ENCODE measurements at regions of chr5 and their contacts with region 1.

Region 1: GRCh38 chr5:57635146-57635777 is 152.7 kb upstream of the ACTBL2 start:
- DNase-seq: no peak
- H3K4me3 Mint-ChIP-seq: no peak overlapping the region
- H3K27ac Mint-ChIP-seq: no peak overlapping the region
- H3K4me1 Mint-ChIP-seq: no peaks in the 10 kb centered on the region
- H3K27me3 Mint-ChIP-seq: peaks cover 6% of the 10 kb centered on the region

Region 2: GRCh38 chr5:57007344-57007743 is 627.9 kb before region 1 on chr5:
- CTCF ChIA-PET with region 1: no interaction called
- POLR2A ChIA-PET with region 1: no interaction called
- intact Hi-C with region 1: no loop called
- DNase-seq: no peak
- H3K4me3 Mint-ChIP-seq: no peak overlapping the region
- H3K27ac Mint-ChIP-seq: no peak overlapping the region
- H3K4me1 Mint-ChIP-seq: no peaks in the 10 kb centered on the region
- H3K27me3 Mint-ChIP-seq: peaks cover 2% of the 10 kb centered on the region

Region 3: DNA sequence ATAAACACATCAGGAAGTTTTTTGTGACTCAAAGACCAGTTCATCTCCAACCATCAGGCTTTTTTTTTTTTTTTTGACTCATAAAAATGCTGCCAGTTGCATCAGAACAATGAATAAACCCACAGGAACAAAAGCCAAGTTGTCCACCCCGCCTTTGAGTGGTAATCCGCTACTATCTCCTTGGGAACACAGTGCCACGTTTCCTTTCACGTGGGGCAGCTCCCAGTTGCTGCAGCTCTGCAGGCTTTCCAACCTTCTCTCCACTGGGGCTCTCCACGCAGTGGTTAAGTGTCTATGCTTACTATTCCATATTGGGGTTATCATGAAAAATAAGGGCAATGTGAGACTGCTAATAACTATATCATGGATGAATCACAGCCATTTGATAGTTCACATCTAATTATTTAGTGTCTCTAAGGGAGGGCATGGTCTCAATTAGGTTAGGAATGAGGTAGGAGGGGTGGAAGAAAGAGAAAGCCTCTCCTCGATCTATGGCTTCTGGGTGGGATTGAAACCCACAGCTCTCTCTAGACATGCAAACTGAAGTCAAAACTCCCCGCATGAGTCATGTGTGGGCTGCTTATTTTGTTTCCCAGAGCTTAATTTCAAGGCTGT is 96.8 kb before region 1 on chr5:
- CTCF ChIA-PET with region 1: no interaction called
- POLR2A ChIA-PET with region 1: no interaction called
- intact Hi-C with region 1: no loop called
- DNase-seq: no peak
- H3K4me3 Mint-ChIP-seq: no peak overlapping the region
- H3K27ac Mint-ChIP-seq: no peak overlapping the region
- H3K4me1 Mint-ChIP-seq: peaks cover 9% of the 10 kb centered on the region
- H3K27me3 Mint-ChIP-seq: peaks cover 3% of the 10 kb centered on the region

Region 4: GRCh38 chr5:57566914-57567313 is 68.3 kb before region 1 on chr5:
- CTCF ChIA-PET with region 1: no interaction called
- POLR2A ChIA-PET with region 1: no interaction called
- intact Hi-C with region 1: no loop called
- DNase-seq: no peak
- H3K4me3 Mint-ChIP-seq: no peak overlapping the region
- H3K27ac Mint-ChIP-seq: no peak overlapping the region
- H3K4me1 Mint-ChIP-seq: no peaks in the 10 kb centered on the region
- H3K27me3 Mint-ChIP-seq: peaks cover 28% of the 10 kb centered on the region

Region 5: GRCh38 chr5:57650360-57651069 is 15.3 kb after region 1 on chr5:
- CTCF ChIA-PET with region 1: interaction called, 16 read pairs
- POLR2A ChIA-PET with region 1: no interaction called
- intact Hi-C with region 1: no loop called
- DNase-seq: peak; percentile 19
- H3K4me3 Mint-ChIP-seq: no peak overlapping the region
- H3K27ac Mint-ChIP-seq: no peak overlapping the region
- H3K4me1 Mint-ChIP-seq: no peaks in the 10 kb centered on the region
- H3K27me3 Mint-ChIP-seq: peaks cover 15% of the 10 kb centered on the region

Region 6: GRCh38 chr5:57976506-57976905 is 341.2 kb after region 1 on chr5:
- CTCF ChIA-PET with region 1: no interaction called
- POLR2A ChIA-PET with region 1: no interaction called
- intact Hi-C with region 1: no loop called
- DNase-seq: no peak
- H3K4me3 Mint-ChIP-seq: no peak overlapping the region
- H3K27ac Mint-ChIP-seq: no peak overlapping the region
- H3K4me1 Mint-ChIP-seq: no peaks in the 10 kb centered on the region
- H3K27me3 Mint-ChIP-seq: no peaks in the 10 kb centered on the region

Measured in activated CD4-positive, alpha-beta memory T cell treated with anti-CD3 and anti-CD28 coated beads for 36 hours (primary cell).